Gastrocnemius medialis (tissue), 4 donors: ENCODE measurements at regions of chr2 and their contacts with region 1.

Region 1: DNA sequence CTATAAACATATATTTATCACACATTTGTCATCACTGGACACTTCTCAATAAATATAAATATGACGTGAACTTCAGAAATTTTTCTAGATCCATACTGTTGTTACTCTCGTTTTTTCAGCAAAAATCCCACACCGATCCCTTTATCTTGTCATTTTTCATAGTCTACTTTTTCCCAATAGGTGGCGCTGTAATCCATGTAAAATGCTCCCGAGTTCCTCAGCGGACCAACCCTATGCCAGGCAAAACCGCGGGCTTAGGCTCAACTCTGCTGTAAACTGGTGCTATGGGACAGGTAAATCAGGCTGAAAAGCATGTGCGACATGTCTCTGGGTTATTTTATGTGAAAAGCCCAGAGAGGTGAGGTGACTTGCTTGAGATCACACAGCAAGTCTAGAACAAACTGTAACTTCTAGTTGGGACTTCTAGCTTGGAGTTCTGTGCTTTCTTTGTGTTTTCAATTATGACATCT is 104.0 kb downstream of the COBLL1 start:
- DNase-seq: peak; percentile 3 to 29
- ATAC-seq: peak; percentile 72 to 84
- H3K4me3 ChIP-seq: no peak overlapping the region
- H3K27ac ChIP-seq: no peak overlapping the region
- H3K4me1 ChIP-seq: no peaks in the 10 kb centered on the region
- H3K27me3 ChIP-seq: no peaks in the 10 kb centered on the region
- CTCF ChIP-seq: peak; percentile 43 to 72 (median 59)
- POLR2A ChIP-seq: no peak

Region 2: GRCh38 chr2:164841719-164842623 is 104.3 kb after region 1 on chr2 and contains the start of gene COBLL1:
- in situ Hi-C with region 1: loop called in 1 of 4 experiments (anchors 10 kb)
- intact Hi-C with region 1: loop called (anchors 5 kb)
- DNase-seq: peak; percentile 48 to 54
- ATAC-seq: peak; percentile 77 to 84
- H3K4me3 ChIP-seq: peak within 1 kb of the TSS; percentile 76 to 93 (median 84)
- H3K27ac ChIP-seq: peak within 1 kb of the TSS; percentile 76 to 92 (median 85)
- H3K4me1 ChIP-seq: peaks cover 8 to 12% of the 10 kb centered on the region in 2 donors
- H3K27me3 ChIP-seq: no peaks in the 10 kb centered on the region
- CTCF ChIP-seq: peak; percentile 51 to 86 (median 79)
- POLR2A ChIP-seq: no peak
- total RNA-seq, gene COBLL1: 1.9 to 9.6 (median 4.0) TPM

Region 3: DNA sequence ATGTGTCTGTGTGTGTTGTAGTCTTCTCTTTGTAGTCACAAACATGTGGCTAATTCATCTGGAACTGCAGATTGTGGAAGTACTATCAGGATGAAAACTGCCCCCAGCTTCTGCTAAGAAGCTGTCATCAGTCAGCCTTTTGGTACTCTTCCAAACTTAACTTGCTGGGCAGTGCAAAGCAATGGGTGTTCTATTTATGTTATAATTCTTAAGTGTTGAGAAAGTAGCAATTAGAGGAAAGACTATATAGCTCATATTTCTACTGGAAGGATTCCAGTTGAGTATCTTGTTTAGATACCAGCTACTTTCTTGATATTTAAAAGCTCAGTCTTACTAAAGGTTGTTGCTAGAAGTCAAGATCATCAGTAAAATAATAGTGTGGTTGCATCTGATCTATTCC is 165.6 kb after region 1 on chr2:
- in situ Hi-C with region 1: loop called in 2 of 4 experiments (anchors 10 to 25 kb)
- intact Hi-C with region 1: no loop called
- DNase-seq: no peak
- ATAC-seq: no peak
- H3K4me3 ChIP-seq: no peak overlapping the region
- H3K27ac ChIP-seq: no peak overlapping the region
- H3K4me1 ChIP-seq: no peaks in the 10 kb centered on the region
- H3K27me3 ChIP-seq: no peaks in the 10 kb centered on the region
- CTCF ChIP-seq: no peak
- POLR2A ChIP-seq: no peak

Region 4: GRCh38 chr2:164910101-164910899 is 172.7 kb after region 1 on chr2:
- in situ Hi-C with region 1: loop called (anchors 5 to 25 kb)
- intact Hi-C with region 1: no loop called
- DNase-seq: no peak
- ATAC-seq: no peak
- H3K4me3 ChIP-seq: no peak overlapping the region
- H3K27ac ChIP-seq: no peak overlapping the region
- H3K4me1 ChIP-seq: peaks cover 0 to 3% of the 10 kb centered on the region in 2 donors
- H3K27me3 ChIP-seq: no peaks in the 10 kb centered on the region
- CTCF ChIP-seq: no peak
- POLR2A ChIP-seq: no peak

Region 5: GRCh38 chr2:164917296-164917903 is 179.8 kb after region 1 on chr2:
- in situ Hi-C with region 1: loop called in 3 of 4 experiments (anchors 5 to 25 kb)
- intact Hi-C with region 1: loop called (anchors 2 kb)
- DNase-seq: no peak
- ATAC-seq: no peak
- H3K4me3 ChIP-seq: no peak overlapping the region
- H3K27ac ChIP-seq: no peak overlapping the region
- H3K4me1 ChIP-seq: peaks cover 0 to 1% of the 10 kb centered on the region in 2 donors
- H3K27me3 ChIP-seq: no peaks in the 10 kb centered on the region
- CTCF ChIP-seq: peak in 3 of 5 experiments; percentile 25 to 55 (median 27)
- POLR2A ChIP-seq: no peak

Region 6: GRCh38 chr2:165203689-165204559 is 466.3 kb after region 1 on chr2 and contains the start of gene SCN3A:
- in situ Hi-C with region 1: no loop called
- intact Hi-C with region 1: loop called (anchors 10 kb)
- DNase-seq: no peak
- ATAC-seq: no peak
- H3K4me3 ChIP-seq: peak within 1 kb of the TSS in 3 of 4 donors; percentile 5 to 29 (median 17)
- H3K27ac ChIP-seq: no peak within 1 kb of the TSS
- H3K4me1 ChIP-seq: no peaks in the 10 kb centered on the region
- H3K27me3 ChIP-seq: no peaks in the 10 kb centered on the region
- CTCF ChIP-seq: peak in 2 of 5 experiments; percentile 55 to 61
- POLR2A ChIP-seq: no peak
- total RNA-seq, gene SCN3A: 0.53 to 1.8 (median 1.3) TPM